ENCODE measurements at regions of chr1 and their contacts with region 1.

Region 1: DNA sequence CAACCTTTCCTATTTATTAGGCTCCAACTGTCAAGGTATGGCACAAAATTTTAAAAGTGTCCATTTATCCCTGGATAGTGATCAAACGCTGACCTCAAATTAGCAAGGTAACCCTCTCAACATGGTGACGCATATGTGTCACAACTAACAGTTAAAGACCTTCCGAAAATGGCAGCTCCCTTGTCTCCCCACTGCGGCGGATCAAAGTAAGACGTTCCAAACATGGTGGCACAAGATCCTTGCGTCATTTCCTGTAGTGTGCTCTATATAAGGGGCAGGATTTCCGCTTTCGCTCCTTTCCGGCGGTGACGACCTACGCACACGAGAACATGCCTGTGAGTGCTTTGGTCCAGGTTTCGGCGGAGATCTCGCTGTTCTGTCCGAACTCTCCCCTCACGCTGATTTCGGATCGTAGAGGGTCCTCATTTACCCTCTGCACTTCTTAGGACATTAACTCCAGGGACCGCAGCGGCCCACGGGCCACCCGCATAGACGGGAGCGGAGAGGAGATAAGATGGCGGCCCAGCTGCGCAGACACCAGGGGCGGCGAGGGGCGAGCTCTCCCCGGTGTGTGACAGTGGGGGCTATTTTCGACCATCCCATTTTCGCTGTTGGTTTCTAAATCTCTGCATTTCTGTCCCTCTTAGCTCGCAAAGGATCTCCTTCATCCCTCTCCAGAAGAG is at the start of gene RPS27:
- DNase-seq: peak; percentile 88
- H3K4me3 Mint-ChIP-seq: peak within 1 kb of the TSS; percentile 88
- H3K27ac Mint-ChIP-seq: peak within 1 kb of the TSS; percentile 92
- H3K4me1 Mint-ChIP-seq: peaks cover 39% of the 10 kb centered on the region
- H3K27me3 Mint-ChIP-seq: no peaks in the 10 kb centered on the region
- total RNA-seq, gene RPS27: 1,296 and 1,372 TPM in 2 replicates

Region 2: DNA sequence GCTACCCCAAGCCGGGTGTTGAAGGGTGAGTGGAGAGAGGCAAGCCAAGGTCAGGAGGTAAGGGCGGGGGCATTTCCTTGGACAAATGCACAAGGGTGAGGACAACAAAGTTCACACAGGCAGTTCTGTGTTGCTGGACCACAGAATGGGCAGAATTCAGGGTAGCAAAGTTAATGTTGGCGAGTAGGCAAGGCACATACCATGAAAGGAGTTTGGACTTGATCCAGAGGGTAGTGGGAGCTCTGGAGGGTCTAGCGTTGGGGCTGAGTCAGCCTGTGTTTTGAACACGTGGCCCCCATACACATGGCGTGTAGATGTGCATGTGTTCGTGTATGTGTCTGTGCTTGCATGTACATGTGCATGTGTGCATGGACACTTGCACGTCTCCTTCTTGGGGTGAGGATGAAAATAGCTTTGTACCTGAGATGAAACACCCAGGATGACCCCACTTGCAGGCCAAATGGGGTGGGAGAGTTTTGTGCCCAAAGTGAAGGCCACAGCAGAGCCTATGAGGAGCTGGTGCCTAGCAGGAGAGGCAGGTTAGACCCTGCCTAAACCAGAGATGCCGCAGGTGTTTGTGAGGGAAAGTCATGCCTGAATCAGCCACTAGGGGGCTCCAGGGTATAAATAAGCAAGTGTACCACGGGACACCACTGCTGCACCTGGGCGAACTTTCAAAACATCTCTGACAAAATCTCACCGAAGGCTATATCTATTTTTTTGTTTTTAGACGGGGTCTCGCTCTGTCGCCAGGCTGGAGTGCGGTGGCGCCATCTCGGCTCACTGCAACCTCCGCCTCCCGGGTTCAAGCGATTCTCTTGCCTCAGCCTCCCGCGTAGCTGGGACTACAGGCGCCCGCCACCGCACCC is 193.6 kb before region 1 on chr1:
- intact Hi-C with region 1: loop called (anchors 2 kb)
- DNase-seq: peak; percentile 72
- H3K4me3 Mint-ChIP-seq: no peak overlapping the region
- H3K27ac Mint-ChIP-seq: no peak overlapping the region
- H3K4me1 Mint-ChIP-seq: peaks cover 7% of the 10 kb centered on the region
- H3K27me3 Mint-ChIP-seq: no peaks in the 10 kb centered on the region

Region 3: GRCh38 chr1:153928791-153929341 is 61.7 kb before region 1 on chr1:
- intact Hi-C with region 1: no loop called
- DNase-seq: no peak
- H3K4me3 Mint-ChIP-seq: no peak overlapping the region
- H3K27ac Mint-ChIP-seq: no peak overlapping the region
- H3K4me1 Mint-ChIP-seq: peaks cover 4% of the 10 kb centered on the region
- H3K27me3 Mint-ChIP-seq: no peaks in the 10 kb centered on the region